PC-9 (cell line): ENCODE measurements at regions of chr2 and their contacts with region 1.

Region 1: GRCh38 chr2:167857416-167857815 is 390.0 kb downstream of the STK39 start:
- DNase-seq: no peak
- H3K4me3 ChIP-seq: no peak overlapping the region
- H3K27ac ChIP-seq: no peak overlapping the region
- H3K4me1 ChIP-seq: no peaks in the 10 kb centered on the region
- H3K27me3 ChIP-seq: no peaks in the 10 kb centered on the region
- CTCF ChIP-seq: no peak

Region 2: GRCh38 chr2:167689444-167689843 is 168.0 kb before region 1 on chr2:
- CTCF ChIA-PET with region 1: no interaction called
- POLR2A ChIA-PET with region 1: no interaction called
- intact Hi-C with region 1: no loop called
- DNase-seq: no peak
- H3K4me3 ChIP-seq: no peak overlapping the region
- H3K27ac ChIP-seq: no peak overlapping the region
- H3K4me1 ChIP-seq: no peaks in the 10 kb centered on the region
- H3K27me3 ChIP-seq: no peaks in the 10 kb centered on the region
- CTCF ChIP-seq: no peak

Region 3: DNA sequence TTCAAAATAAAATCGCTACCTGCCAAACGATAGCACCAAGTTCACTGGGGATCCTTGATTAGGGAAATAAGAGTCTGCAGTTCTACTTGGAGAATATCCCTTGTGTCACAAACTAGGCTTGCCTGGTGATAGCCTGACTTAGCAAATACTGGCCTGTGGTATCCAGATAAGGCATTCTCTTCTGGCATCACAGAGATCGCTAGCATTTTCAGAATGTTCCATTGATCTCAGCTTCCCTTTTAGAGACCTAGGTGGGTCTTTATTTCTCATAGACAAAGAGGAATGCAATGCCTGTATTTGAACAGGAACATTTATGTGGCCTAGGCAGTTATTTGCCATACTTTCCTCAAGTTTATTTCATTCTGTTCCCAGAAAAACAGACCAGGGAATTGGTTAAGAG is 40.9 kb after region 1 on chr2:
- CTCF ChIA-PET with region 1: no interaction called
- POLR2A ChIA-PET with region 1: interaction called, 24 read pairs
- intact Hi-C with region 1: no loop called
- DNase-seq: no peak
- H3K4me3 ChIP-seq: no peak overlapping the region
- H3K27ac ChIP-seq: no peak overlapping the region
- H3K4me1 ChIP-seq: no peaks in the 10 kb centered on the region
- H3K27me3 ChIP-seq: no peaks in the 10 kb centered on the region
- CTCF ChIP-seq: no peak

Region 4: GRCh38 chr2:167908786-167909185 is 51.4 kb after region 1 on chr2:
- CTCF ChIA-PET with region 1: no interaction called
- POLR2A ChIA-PET with region 1: no interaction called
- intact Hi-C with region 1: no loop called
- DNase-seq: no peak
- H3K4me3 ChIP-seq: no peak overlapping the region
- H3K27ac ChIP-seq: no peak overlapping the region
- H3K4me1 ChIP-seq: no peaks in the 10 kb centered on the region
- H3K27me3 ChIP-seq: no peaks in the 10 kb centered on the region
- CTCF ChIP-seq: no peak

Region 5: GRCh38 chr2:167943897-167944296 is 86.5 kb after region 1 on chr2:
- CTCF ChIA-PET with region 1: no interaction called
- POLR2A ChIA-PET with region 1: no interaction called
- intact Hi-C with region 1: no loop called
- DNase-seq: no peak
- H3K4me3 ChIP-seq: no peak overlapping the region
- H3K27ac ChIP-seq: no peak overlapping the region
- H3K4me1 ChIP-seq: no peaks in the 10 kb centered on the region
- H3K27me3 ChIP-seq: no peaks in the 10 kb centered on the region
- CTCF ChIP-seq: no peak